ENCODE measurements at regions of chr5 and their contacts with region 1.

Region 1: GRCh38 chr5:115296124-115297022 is at the start of gene CCDC112:
- DNase-seq: peak; percentile 82
- ATAC-seq: peak; percentile 86
- H3K4me3 ChIP-seq: peak within 1 kb of the TSS; percentile 53 to 78 (median 70)
- H3K4me3 Mint-ChIP-seq: peak within 1 kb of the TSS; percentile 86
- H3K27ac ChIP-seq: peak within 1 kb of the TSS in 1 of 2 donors; percentile 39
- H3K27ac Mint-ChIP-seq: peak within 1 kb of the TSS; percentile 16
- H3K4me1 ChIP-seq: peaks cover 7 to 13% of the 10 kb centered on the region in 2 donors
- H3K4me1 Mint-ChIP-seq: peaks cover 16% of the 10 kb centered on the region
- H3K27me3 ChIP-seq: no peaks in the 10 kb centered on the region
- H3K27me3 Mint-ChIP-seq: no peaks in the 10 kb centered on the region
- CTCF ChIP-seq: no peak
- total RNA-seq, gene CCDC112: 9.6 and 11.1 TPM in 2 replicates

Region 2: DNA sequence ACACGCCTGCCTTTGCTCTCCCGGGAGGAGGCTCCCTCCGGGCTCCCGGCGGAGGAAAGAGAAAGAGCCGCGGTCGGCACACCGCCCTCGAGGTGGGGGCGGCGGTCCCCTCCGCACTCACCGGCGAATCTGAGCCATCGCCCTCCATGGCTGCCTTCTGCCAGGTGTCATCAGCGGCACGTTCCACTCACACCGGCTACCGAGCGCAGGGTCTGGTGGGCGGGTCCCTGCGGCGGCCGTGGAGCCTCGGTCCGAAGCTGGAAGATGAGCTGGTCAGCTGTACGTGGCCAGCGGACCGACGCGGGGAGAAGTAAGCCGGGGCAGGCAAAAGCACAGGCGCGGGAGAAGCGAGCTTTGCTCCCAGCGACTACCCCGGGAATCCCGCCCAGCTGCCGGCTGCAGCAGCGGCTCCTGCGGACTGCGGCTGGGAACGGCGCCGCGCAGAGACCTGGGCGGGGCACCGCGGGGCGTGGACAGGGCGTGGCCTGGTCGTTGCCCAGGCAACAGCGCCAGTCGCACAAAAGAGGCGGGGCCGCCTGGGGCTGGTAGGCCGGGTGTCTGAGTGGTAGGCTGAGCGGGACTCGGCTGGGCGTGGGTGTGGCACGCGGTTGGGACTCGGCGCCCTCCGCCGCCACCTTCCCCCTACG is 126.8 kb before region 1 on chr5 and contains the start of gene TRIM36:
- CTCF ChIA-PET with region 1: no interaction called
- POLR2A ChIA-PET with region 1: no interaction called
- intact Hi-C with region 1: loop called (anchors 2 kb)
- DNase-seq: peak; percentile 94
- ATAC-seq: peak; percentile 92
- H3K4me3 ChIP-seq: peak within 1 kb of the TSS; percentile 53 to 89 (median 75)
- H3K4me3 Mint-ChIP-seq: peak within 1 kb of the TSS; percentile 92
- H3K27ac ChIP-seq: no peak within 1 kb of the TSS
- H3K27ac Mint-ChIP-seq: peak within 1 kb of the TSS; percentile 80
- H3K4me1 ChIP-seq: peaks cover 20 to 21% of the 10 kb centered on the region in 2 donors
- H3K4me1 Mint-ChIP-seq: peaks cover 14% of the 10 kb centered on the region
- H3K27me3 ChIP-seq: peaks cover 0 to 62% (median 32%) of the 10 kb centered on the region in 4 experiments
- H3K27me3 Mint-ChIP-seq: peaks cover 59% of the 10 kb centered on the region
- CTCF ChIP-seq: no peak
- total RNA-seq, gene TRIM36: 0.39 and 1.6 TPM in 2 replicates

Region 3: GRCh38 chr5:115262321-115263077 is 33.9 kb before region 1 on chr5 and contains the start of gene PGGT1B:
- CTCF ChIA-PET with region 1: interaction called, 5 read pairs
- POLR2A ChIA-PET with region 1: interaction called, 5 read pairs
- intact Hi-C with region 1: loop called (anchors 1 kb)
- DNase-seq: peak; percentile 84
- ATAC-seq: peak; percentile 90
- H3K4me3 ChIP-seq: peak within 1 kb of the TSS; percentile 78 to 97 (median 87)
- H3K4me3 Mint-ChIP-seq: peak within 1 kb of the TSS; percentile 92
- H3K27ac ChIP-seq: peak within 1 kb of the TSS; percentile 88 to 92
- H3K27ac Mint-ChIP-seq: peak within 1 kb of the TSS; percentile 92
- H3K4me1 ChIP-seq: peaks cover 20 to 26% of the 10 kb centered on the region in 2 donors
- H3K4me1 Mint-ChIP-seq: peaks cover 49% of the 10 kb centered on the region
- H3K27me3 ChIP-seq: no peaks in the 10 kb centered on the region
- H3K27me3 Mint-ChIP-seq: no peaks in the 10 kb centered on the region
- CTCF ChIP-seq: no peak
- total RNA-seq, gene PGGT1B: 63.4 and 64.8 TPM in 2 replicates

Region 4: GRCh38 chr5:115271295-115272050 is 24.9 kb before region 1 on chr5:
- CTCF ChIA-PET with region 1: interaction called, 5 read pairs
- POLR2A ChIA-PET with region 1: no interaction called
- intact Hi-C with region 1: loop called (anchors 2 kb)
- DNase-seq: peak; percentile 16
- ATAC-seq: peak; percentile 33
- H3K4me3 ChIP-seq: peak overlapping the region in 1 of 5 experiments; percentile 34
- H3K4me3 Mint-ChIP-seq: peak overlapping the region; percentile 52
- H3K27ac ChIP-seq: peak overlapping the region; percentile 48 to 65
- H3K27ac Mint-ChIP-seq: peak overlapping the region; percentile 59
- H3K4me1 ChIP-seq: peaks cover 34 to 38% of the 10 kb centered on the region in 2 donors
- H3K4me1 Mint-ChIP-seq: peaks cover 44% of the 10 kb centered on the region
- H3K27me3 ChIP-seq: no peaks in the 10 kb centered on the region
- H3K27me3 Mint-ChIP-seq: no peaks in the 10 kb centered on the region
- CTCF ChIP-seq: no peak

Measured in B cell (primary cell).